ENCODE measurements at regions of chr11 and their contacts with region 1.

Region 1: DNA sequence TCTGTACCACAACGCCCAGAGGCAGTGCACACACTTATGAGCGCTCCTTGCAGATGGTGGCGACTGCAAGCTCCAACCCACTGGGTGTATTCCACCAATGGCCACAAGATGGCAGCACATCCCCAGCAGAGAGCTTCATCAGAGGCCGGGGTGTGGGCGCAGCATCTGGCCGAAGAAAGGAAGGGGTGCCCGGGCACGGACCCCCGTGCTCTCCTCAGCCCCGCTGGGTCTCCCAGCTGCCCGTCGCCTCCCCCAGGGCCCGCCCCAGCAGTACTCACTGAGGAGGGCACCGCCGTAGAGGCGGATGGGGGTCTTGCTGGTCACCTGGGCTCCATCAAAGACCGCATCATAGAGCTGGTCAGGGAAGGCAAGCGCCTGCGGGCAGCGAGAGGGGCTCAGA is 14.2 kb downstream of the TP53I11 start:
- DNase-seq: peak; percentile 79 to 82
- ATAC-seq: peak; percentile 80 to 88 (median 86)
- H3K4me3 ChIP-seq: no peak overlapping the region
- H3K27ac ChIP-seq: no peak overlapping the region
- H3K4me1 ChIP-seq: peaks cover 10% of the 10 kb centered on the region
- H3K27me3 ChIP-seq: no peaks in the 10 kb centered on the region
- CTCF ChIP-seq: peak; percentile 97

Region 2: DNA sequence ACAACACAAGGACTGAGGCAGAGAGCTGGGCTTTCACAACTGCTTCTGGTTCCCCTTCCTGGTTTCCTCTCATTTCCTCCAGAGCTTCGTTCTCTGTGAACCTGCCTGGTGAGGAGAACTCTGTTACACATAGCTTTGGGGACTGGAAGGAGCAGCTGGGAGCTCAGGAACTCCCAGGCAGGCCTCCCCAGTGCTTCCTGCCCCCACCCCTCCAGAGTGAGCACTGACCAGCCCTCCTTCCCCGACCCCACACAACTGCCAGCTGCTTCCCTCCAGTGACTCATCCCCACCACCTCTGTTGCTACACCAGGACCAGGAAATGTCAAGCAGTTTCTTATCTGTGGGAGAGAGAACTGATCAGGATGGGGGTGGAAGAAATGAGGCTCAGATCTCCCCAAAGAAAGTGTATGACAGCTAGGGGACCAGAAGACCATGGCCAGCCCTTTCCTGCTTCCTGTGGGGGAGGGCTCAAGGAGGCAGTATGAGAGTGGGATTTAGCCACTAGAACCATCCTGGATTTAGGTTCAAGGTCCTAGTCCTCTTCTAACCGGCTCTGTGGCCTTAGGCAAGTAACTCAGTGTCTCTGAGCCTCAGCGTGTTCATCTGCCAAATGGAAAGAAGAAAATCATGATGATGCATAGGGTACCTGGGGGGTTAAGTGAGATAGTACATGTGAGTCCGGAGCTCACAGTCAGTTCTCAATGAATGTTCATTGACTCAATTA is 18.7 kb after region 1 on chr11:
- intact Hi-C with region 1: no loop called
- DNase-seq: peak; percentile 73 to 77
- ATAC-seq: peak; percentile 39 to 56 (median 53)
- H3K4me3 ChIP-seq: no peak overlapping the region
- H3K27ac ChIP-seq: no peak overlapping the region
- H3K4me1 ChIP-seq: no peaks in the 10 kb centered on the region
- H3K27me3 ChIP-seq: peaks cover 0 to 9% (median 0%) of the 10 kb centered on the region in 3 donors
- CTCF ChIP-seq: no peak

Region 3: DNA sequence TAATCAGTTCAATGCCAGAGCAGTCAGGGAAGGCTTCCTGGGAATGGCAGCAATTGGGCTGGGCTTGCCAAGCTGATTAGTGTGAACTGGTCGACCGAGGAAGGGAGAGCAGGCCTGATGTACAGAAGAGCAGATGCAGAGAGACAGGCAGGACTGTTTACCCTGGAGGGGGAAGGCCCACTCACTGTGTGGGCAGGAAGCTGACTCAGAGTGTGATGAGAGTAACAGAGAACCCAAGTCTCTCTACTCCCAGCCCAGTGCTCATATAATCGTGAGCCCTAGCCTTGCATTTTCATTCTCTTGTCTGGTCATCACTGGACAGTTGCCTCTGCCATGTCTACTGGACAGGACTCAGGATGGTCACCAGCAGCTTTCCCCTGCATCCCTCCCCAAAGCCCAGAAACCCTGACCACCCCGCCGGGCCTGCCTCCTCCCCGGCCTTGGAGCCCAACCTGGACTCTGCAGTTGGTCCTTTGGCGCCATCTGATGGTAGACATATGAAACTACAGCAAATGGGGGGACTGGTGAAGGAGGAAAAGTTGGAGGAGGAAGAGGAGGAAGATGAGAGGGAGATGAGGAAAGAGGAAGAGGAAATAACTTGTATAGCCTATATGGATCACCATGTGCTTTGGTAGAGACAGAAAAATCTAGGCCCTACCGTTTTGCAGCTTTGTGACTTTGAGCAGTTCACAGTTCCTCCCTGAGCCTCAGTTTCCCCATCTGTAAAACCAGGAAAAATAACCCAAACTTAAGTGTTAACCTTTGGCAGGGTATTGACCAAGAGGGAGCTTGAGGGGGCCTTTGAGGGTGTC is 166.5 kb after region 1 on chr11:
- intact Hi-C with region 1: loop called (anchors 1 to 2 kb)
- DNase-seq: peak; percentile 59 to 74
- ATAC-seq: peak; percentile 65 to 80 (median 74)
- H3K4me3 ChIP-seq: no peak overlapping the region
- H3K27ac ChIP-seq: no peak overlapping the region
- H3K4me1 ChIP-seq: peaks cover 3% of the 10 kb centered on the region
- H3K27me3 ChIP-seq: peaks cover 0 to 2% (median 0%) of the 10 kb centered on the region in 3 donors
- CTCF ChIP-seq: peak; percentile 98

Region 4: GRCh38 chr11:45294499-45294898 is 358.0 kb after region 1 on chr11:
- intact Hi-C with region 1: loop called (anchors 5 kb)
- DNase-seq: no peak
- ATAC-seq: no peak
- H3K4me3 ChIP-seq: no peak overlapping the region
- H3K27ac ChIP-seq: no peak overlapping the region
- H3K4me1 ChIP-seq: no peaks in the 10 kb centered on the region
- H3K27me3 ChIP-seq: peaks cover 0 to 26% (median under 1%) of the 10 kb centered on the region in 3 donors
- CTCF ChIP-seq: no peak

Region 5: GRCh38 chr11:45339729-45340519 is 403.4 kb after region 1 on chr11:
- intact Hi-C with region 1: loop called in 1 of 2 experiments (anchors 10 kb)
- DNase-seq: peak; percentile 92 to 96
- ATAC-seq: peak; percentile 94 to 97 (median 96)
- H3K4me3 ChIP-seq: peak overlapping the region; percentile 37
- H3K27ac ChIP-seq: no peak overlapping the region
- H3K4me1 ChIP-seq: no peaks in the 10 kb centered on the region
- H3K27me3 ChIP-seq: peaks cover 0 to 9% (median 0%) of the 10 kb centered on the region in 3 donors
- CTCF ChIP-seq: peak; percentile 92

Measured in psoas muscle (tissue), 8 donors.